Right ventricle myocardium superior (tissue), 1 donor: ENCODE measurements at regions of chr22 and their contacts with region 1.

Region 1: GRCh38 chr22:26134654-26135330 is 34.5 kb upstream of the SEZ6L start:
- DNase-seq: no peak
- ATAC-seq: no peak

Region 2: GRCh38 chr22:25959818-25960774 is 174.7 kb before region 1 on chr22:
- intact Hi-C with region 1: no loop called
- DNase-seq: no peak
- ATAC-seq: no peak

Region 3: DNA sequence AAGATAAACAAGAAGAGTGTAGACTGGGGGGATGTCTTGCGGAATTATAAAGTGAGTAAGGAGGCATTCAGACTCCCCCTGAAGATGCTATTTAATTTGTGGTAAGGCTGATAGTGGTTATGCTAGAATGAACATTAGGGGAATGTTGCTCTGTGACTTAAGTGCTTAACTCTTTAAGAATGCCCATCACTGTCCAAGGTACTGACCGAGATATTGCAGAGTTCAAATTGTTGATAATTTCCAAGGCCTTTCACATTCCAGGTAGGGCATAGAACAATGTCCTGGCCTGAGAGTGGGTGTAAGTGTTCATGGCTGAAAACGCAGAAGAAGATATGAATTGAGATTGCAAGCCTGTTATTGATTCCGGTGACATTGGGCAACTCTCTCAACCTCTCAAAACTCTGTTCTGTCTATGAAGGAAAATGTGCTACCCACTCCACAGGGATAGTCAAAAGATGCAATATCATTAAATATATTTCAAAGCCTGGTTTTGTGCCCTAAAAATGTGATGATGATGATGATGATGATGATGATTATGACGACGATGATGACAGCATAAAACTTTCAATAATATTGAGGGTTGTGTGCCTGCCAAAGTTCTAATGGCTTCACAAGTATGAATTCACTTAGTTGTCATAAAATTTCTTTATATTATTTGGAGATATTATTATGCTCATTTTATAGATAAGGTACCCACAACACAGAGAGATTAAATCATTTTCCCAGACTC is 55.6 kb before region 1 on chr22:
- intact Hi-C with region 1: loop called (anchors 10 kb)
- DNase-seq: no peak
- ATAC-seq: no peak